ENCODE measurements at regions of chr3 and their contacts with region 1.

Region 1: DNA sequence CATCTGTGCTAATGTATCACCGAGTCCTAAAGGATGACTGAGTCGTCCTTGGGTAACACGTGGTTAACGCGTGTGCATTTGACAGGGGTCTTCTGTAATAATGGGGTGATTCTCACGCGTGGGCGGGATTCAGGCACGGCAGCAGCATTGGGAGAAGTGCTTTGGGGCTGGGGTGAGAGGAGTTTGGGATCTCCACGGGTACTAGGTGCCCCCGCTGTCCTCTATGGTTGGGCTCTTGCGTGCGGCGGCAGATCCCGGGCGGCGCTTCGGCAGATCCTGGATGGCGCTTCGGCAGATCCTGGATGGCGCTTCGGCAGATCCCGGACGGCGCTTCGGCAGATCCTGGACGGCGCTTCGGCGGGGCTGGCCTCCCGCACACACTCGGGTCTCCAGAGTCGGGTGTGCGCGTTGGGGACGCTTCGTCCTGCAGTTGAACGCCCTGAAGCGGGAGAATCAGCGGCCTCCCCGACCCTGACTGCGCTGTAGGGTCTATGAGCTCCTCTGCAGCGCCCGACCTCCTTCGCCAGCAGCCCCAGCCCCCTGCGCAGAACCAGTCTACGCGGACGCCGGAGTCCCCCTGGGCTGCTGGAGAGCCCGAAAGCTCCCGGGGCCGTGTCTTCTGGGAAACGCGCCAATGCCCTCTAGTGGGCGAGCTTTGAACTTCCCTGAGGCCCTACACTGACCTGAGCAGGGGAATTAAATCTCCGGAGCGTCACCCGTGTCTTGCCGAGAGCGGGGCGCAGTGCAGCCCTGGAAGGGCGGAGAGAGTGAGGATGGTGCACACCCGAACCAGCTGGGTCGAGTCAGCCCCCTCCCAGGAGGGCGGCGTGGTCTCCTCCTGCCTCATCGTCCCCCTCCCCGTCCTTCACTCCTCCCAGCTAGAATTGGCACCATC is 48.1 kb upstream of the EPHB3 start:
- DNase-seq: peak; percentile 55 to 86 (median 73)
- ATAC-seq: peak; percentile 95 to 100 (median 98)
- H3K4me3 ChIP-seq: peak overlapping the region; percentile 30 to 46
- H3K4me3 Mint-ChIP-seq: peak overlapping the region; percentile 43 to 53 (median 50)
- H3K27ac ChIP-seq: no peak overlapping the region
- H3K27ac Mint-ChIP-seq: no peak overlapping the region
- H3K4me1 ChIP-seq: peaks cover 2 to 12% of the 10 kb centered on the region in 2 experiments
- H3K4me1 Mint-ChIP-seq: peaks cover 5 to 13% (median 9%) of the 10 kb centered on the region in 3 donors
- H3K27me3 ChIP-seq: peaks cover 3 to 40% of the 10 kb centered on the region in 2 experiments
- H3K27me3 Mint-ChIP-seq: peaks cover 33 to 63% of the 10 kb centered on the region in 2 donors

Region 2: DNA sequence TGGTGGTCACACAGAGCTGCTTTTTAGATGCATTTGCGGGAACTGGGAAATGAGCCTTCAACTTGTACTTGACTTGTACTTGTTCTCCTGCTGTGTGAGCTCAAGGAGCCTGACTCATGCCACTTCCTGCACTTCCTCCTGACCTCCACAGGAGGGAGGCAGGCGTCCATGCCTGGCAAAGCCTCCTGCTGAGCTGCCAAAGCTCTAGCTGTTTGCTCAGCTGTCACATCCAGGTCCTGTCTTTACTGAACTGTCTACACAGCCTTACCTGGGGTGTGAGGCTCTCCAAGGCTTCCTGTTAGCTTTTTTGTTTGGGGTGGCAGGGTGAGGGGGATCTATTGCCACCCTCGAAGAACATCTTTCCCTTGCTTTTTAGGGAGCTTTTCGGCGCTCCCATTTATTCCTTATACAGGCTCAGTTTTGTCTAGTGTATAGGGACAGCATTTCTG is 141.9 kb before region 1 on chr3:
- CTCF ChIA-PET with region 1: interaction called, 6 to 27 read pairs
- POLR2A ChIA-PET with region 1: no interaction called
- DNase-seq: peak in 33 of 35 experiments; percentile 25 to 74 (median 51)
- ATAC-seq: peak; percentile 90 to 99 (median 95)
- H3K4me3 ChIP-seq: no peak overlapping the region
- H3K4me3 Mint-ChIP-seq: no peak overlapping the region
- H3K27ac ChIP-seq: no peak overlapping the region
- H3K27ac Mint-ChIP-seq: peak overlapping the region in 1 of 2 donors; percentile 11
- H3K4me1 ChIP-seq: peaks cover 0 to 5% of the 10 kb centered on the region in 2 experiments
- H3K4me1 Mint-ChIP-seq: peaks cover 4 to 14% (median 11%) of the 10 kb centered on the region in 3 donors
- H3K27me3 ChIP-seq: peaks cover 0 to 9% of the 10 kb centered on the region in 2 experiments
- H3K27me3 Mint-ChIP-seq: peaks cover 10 to 12% of the 10 kb centered on the region in 2 donors

Region 3: GRCh38 chr3:184525337-184526087 is 12.0 kb after region 1 on chr3:
- CTCF ChIA-PET with region 1: interaction called, 6 to 10 read pairs
- POLR2A ChIA-PET with region 1: interaction called in 1 of 2 experiments, 6 read pairs
- DNase-seq: peak in 4 of 35 experiments; percentile 11 to 29 (median 22)
- ATAC-seq: peak; percentile 64 to 76 (median 72)
- H3K4me3 ChIP-seq: peak overlapping the region; percentile 57 to 79
- H3K4me3 Mint-ChIP-seq: peak overlapping the region; percentile 80 to 87 (median 84)
- H3K27ac ChIP-seq: no peak overlapping the region
- H3K27ac Mint-ChIP-seq: peak overlapping the region in 1 of 2 donors; percentile 55
- H3K4me1 ChIP-seq: peaks cover 0 to 8% of the 10 kb centered on the region in 2 experiments
- H3K4me1 Mint-ChIP-seq: peaks cover 11 to 17% (median 14%) of the 10 kb centered on the region in 3 donors
- H3K27me3 ChIP-seq: peaks cover 0 to 34% of the 10 kb centered on the region in 2 experiments
- H3K27me3 Mint-ChIP-seq: peaks cover 10 to 44% of the 10 kb centered on the region in 2 donors

Region 4: DNA sequence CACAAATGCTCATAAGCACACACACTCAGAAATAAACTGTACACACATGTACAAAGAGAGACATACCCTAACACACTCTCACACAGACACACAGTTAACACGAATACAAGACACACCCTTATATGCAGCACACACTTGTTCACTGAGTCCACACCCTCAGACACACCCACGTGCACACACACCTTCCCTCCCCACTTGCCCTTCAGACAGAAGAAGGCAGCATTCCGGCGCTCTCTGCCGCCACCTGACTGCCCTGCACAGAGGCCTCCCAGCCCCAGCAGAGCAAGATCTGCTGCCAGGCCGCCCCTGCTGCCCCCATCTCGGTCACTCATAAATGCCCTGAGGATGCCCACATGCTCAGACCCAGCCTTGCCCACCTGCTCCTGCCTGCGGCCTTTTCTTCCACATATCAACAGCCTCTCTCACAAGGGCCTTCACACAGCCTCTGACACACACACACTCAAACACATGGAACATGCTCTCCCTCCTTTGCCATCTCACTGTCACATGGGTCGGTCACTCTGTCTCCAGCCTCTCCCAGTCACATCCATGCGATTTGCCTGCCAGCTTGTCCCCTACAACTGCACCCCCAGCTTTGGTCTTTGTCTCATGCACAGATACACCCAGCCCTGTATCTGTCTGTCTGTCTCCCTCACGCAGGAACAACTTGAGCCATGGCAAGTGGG is 119.2 kb after region 1 on chr3:
- CTCF ChIA-PET with region 1: no interaction called
- POLR2A ChIA-PET with region 1: no interaction called
- DNase-seq: no peak
- ATAC-seq: no peak
- H3K4me3 ChIP-seq: no peak overlapping the region
- H3K4me3 Mint-ChIP-seq: no peak overlapping the region
- H3K27ac ChIP-seq: no peak overlapping the region
- H3K27ac Mint-ChIP-seq: no peak overlapping the region
- H3K4me1 ChIP-seq: peaks cover 14 to 19% of the 10 kb centered on the region in 2 experiments
- H3K4me1 Mint-ChIP-seq: peaks cover 0 to 24% (median 5%) of the 10 kb centered on the region in 3 donors
- H3K27me3 ChIP-seq: peaks cover 0 to 39% of the 10 kb centered on the region in 2 experiments
- H3K27me3 Mint-ChIP-seq: peaks cover 6% of the 10 kb centered on the region in 2 donors